Naive thymus-derived CD4-positive, alpha-beta T cell (primary cell): ENCODE measurements at regions of chr9 and their contacts with region 1.

Region 1: GRCh38 chr9:34591248-34591916 is 1.9 kb upstream of the CNTFR start:
- DNase-seq: peak; percentile 48 to 85 (median 70)
- ATAC-seq: peak; percentile 85
- H3K4me3 ChIP-seq: peak overlapping the region; percentile 71
- H3K4me3 Mint-ChIP-seq: peak overlapping the region; percentile 28 to 91 (median 81)
- H3K27ac ChIP-seq: no peak overlapping the region
- H3K27ac Mint-ChIP-seq: no peak overlapping the region
- H3K4me1 ChIP-seq: peaks cover 0 to 13% of the 10 kb centered on the region in 2 donors
- H3K4me1 Mint-ChIP-seq: peaks cover 10 to 31% (median 28%) of the 10 kb centered on the region in 7 donors
- H3K27me3 ChIP-seq: peaks cover 4 to 17% of the 10 kb centered on the region in 2 donors
- H3K27me3 Mint-ChIP-seq: peaks cover 55 to 78% (median 66%) of the 10 kb centered on the region in 5 donors

Region 2: DNA sequence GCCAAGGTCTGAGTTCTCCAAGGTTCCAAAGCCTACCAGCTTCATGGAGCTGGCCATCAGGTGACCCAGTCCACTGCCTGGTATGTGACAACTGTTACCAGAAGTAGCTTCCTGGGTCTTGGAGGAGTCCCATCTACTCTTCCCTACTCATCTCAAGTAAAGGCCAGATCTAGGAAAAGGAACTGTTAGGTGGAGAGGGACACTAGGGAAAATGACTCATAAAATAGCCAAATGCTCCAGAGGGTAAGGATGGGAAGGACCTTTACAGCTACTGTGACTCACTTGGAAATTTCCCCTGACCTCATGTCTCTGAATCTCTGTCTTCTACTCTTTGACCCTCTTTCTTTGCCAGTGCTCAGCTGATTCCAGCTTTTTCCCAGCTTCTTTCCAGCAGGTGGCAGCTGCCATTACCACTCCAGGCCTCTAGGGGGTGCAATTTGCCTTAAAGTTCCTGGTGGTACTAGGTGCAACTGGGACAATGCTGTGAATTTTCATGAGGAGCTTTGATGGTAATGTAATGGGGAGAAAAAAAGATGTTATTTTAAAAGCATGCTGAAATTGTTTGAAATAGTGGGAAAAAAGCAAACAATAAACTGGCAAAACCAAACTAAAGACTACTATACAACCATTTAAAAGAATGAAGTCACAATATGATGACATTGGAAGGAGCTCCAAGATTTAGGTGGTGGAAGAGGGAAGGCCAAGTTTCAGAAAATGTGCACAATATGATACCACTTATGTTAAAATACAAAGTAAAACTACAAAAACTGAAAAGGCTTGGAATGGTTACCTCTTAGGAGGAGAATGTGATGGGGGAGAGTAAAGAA is 187.6 kb before region 1 on chr9:
- CTCF ChIA-PET with region 1: interaction called, 14 read pairs
- POLR2A ChIA-PET with region 1: no interaction called
- intact Hi-C with region 1: loop called (anchors 1 to 10 kb)
- DNase-seq: peak in 8 of 9 donors; percentile 22 to 56 (median 40)
- ATAC-seq: peak; percentile 82
- H3K4me3 ChIP-seq: no peak overlapping the region
- H3K4me3 Mint-ChIP-seq: no peak overlapping the region
- H3K27ac ChIP-seq: no peak overlapping the region
- H3K27ac Mint-ChIP-seq: no peak overlapping the region
- H3K4me1 ChIP-seq: no peaks in the 10 kb centered on the region
- H3K4me1 Mint-ChIP-seq: peaks cover 0 to 3% (median 0%) of the 10 kb centered on the region in 7 donors
- H3K27me3 ChIP-seq: no peaks in the 10 kb centered on the region
- H3K27me3 Mint-ChIP-seq: no peaks in the 10 kb centered on the region

Region 3: DNA sequence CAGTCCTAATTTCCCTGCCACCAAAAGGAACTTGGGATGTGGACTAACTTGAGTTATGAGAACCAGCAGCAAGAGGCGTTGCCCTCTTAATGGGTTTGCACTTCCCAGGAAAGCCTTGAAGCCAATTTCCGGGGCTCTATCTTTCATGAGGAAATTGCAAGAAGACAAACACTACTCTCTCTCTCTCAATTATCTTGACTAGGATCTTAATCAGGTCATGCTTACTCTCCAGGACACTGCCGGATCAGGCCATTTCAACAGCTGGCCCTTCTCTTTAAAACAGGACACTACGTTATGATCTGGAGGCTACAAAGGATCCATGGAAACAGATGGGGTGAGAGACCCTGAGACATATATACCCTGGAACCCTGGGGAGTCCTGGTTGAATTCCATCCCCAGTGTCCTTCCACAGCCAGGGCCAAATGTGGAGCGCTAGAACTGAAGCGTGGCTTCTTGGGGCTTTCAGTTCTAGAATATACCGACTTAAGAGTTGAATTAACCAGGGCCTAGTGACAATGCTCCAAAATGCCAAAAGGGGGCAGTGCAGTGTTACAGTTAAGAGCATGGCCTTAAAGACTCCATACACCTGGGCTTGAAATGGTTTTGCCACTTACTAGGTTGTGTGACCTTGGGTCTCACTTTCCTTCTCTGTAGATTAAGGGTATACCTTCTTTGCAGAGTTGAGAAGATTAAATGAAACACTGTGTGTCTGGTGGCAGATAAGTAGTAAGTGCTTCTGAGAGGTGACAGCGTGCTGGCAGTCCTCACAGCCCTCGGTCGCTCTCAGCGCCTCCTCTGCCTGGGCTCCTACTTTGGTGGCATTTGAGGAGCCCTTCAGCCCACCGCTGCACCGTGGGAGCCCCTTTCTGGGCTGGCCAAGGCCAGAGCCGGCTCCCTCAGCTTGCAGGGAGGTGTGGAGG is 154.1 kb before region 1 on chr9:
- CTCF ChIA-PET with region 1: interaction called, 8 read pairs
- POLR2A ChIA-PET with region 1: no interaction called
- intact Hi-C with region 1: loop called (anchors 1 kb)
- DNase-seq: peak in 8 of 9 donors; percentile 49 to 74 (median 65)
- ATAC-seq: peak; percentile 92
- H3K4me3 ChIP-seq: no peak overlapping the region
- H3K4me3 Mint-ChIP-seq: no peak overlapping the region
- H3K27ac ChIP-seq: no peak overlapping the region
- H3K27ac Mint-ChIP-seq: no peak overlapping the region
- H3K4me1 ChIP-seq: peaks cover 0 to 6% of the 10 kb centered on the region in 2 donors
- H3K4me1 Mint-ChIP-seq: peaks cover 6 to 26% (median 17%) of the 10 kb centered on the region in 7 donors
- H3K27me3 ChIP-seq: no peaks in the 10 kb centered on the region
- H3K27me3 Mint-ChIP-seq: no peaks in the 10 kb centered on the region

Region 4: DNA sequence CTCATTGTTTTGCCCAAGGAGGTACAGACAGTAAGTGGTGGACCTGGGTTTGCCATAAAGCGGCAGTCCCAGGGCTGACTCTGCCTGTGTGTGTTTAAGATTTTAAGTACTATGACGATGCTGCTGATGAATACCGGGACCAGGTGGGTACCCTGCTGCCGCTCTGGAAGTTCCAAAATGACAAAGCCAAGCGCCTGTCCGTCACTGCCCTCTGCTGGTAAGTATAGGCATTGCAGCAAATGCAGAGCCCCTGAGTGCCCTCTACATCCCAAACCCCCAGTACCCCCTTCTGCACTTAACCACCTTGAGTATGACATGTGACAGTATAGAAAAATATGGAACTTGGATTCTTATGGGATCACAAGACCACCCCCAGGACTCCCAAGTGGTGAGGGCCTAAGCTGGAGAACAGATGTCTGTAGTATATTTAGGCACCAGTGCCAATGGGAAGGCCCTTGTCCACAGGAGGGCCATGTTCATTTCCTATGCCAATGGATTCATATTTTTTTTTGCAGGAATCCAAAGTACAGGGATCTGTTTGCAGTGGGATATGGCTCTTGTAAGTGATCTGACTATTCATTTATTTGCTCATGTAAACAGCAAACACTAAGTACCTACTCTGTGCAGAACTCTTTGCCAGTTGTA is 90.6 kb before region 1 on chr9:
- CTCF ChIA-PET with region 1: no interaction called
- POLR2A ChIA-PET with region 1: no interaction called
- intact Hi-C with region 1: loop called in 1 of 2 experiments (anchors 2 kb)
- DNase-seq: peak; percentile 38 to 80 (median 61)
- ATAC-seq: peak; percentile 90
- H3K4me3 ChIP-seq: no peak overlapping the region
- H3K4me3 Mint-ChIP-seq: no peak overlapping the region
- H3K27ac ChIP-seq: no peak overlapping the region
- H3K27ac Mint-ChIP-seq: no peak overlapping the region
- H3K4me1 ChIP-seq: no peaks in the 10 kb centered on the region
- H3K4me1 Mint-ChIP-seq: peaks cover 0 to 2% (median 0%) of the 10 kb centered on the region in 7 donors
- H3K27me3 ChIP-seq: no peaks in the 10 kb centered on the region
- H3K27me3 Mint-ChIP-seq: peaks cover 0 to 19% (median 0%) of the 10 kb centered on the region in 5 donors

Region 5: GRCh38 chr9:34546834-34547827 is 44.3 kb before region 1 on chr9:
- CTCF ChIA-PET with region 1: no interaction called
- POLR2A ChIA-PET with region 1: no interaction called
- intact Hi-C with region 1: loop called (anchors 1 kb)
- DNase-seq: peak in 5 of 9 donors; percentile 21 to 47 (median 23)
- ATAC-seq: peak; percentile 58
- H3K4me3 ChIP-seq: no peak overlapping the region
- H3K4me3 Mint-ChIP-seq: peak overlapping the region in 1 of 10 donors; percentile 34
- H3K27ac ChIP-seq: no peak overlapping the region
- H3K27ac Mint-ChIP-seq: no peak overlapping the region
- H3K4me1 ChIP-seq: no peaks in the 10 kb centered on the region
- H3K4me1 Mint-ChIP-seq: peaks cover 0 to 10% (median 0%) of the 10 kb centered on the region in 7 donors
- H3K27me3 ChIP-seq: no peaks in the 10 kb centered on the region
- H3K27me3 Mint-ChIP-seq: peaks cover 7 to 34% (median 12%) of the 10 kb centered on the region in 5 donors